Activated CD8-positive, alpha-beta T cell treated with anti-CD3 and anti-CD28 coated beads for 36 hours (primary cell): ENCODE measurements at regions of chr16 and their contacts with region 1.

Region 1: DNA sequence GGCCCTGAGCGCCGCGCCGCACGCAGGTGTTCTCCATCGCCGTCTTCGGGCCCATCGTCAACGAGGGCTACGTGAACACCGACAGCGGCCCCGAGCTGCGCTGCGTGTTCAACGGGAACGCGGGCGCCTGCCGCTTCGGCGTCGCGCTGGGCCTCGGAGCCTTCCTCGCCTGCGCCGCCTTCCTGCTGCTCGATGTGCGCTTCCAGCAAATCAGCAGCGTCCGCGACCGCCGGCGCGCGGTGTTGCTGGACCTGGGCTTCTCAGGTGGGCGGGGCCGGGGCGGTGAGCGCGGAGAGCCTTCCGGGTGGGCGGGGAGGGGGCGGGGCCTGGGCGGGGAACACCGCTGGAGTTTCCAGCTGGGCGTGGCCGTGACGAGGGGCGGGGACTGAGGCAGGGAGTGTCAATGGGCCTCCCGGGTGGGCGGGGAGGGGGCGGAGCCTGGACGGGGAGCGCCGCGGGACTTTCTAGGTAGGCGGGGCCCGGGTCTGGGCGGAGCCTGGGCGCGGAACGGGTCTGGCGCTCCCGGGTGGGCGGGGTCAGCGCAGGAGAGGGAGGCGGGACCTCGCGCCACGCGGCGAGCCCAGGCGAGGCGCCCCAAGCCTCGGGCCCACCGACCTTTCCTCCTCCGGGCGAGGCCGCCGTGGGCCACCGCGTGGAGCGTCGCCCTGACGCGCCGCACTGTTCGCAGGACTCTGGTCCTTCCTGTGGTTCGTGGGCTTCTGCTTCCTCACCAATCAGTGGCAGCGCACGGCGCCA is 2.4 kb downstream of the SYNGR3 start:
- DNase-seq: peak; percentile 98
- ATAC-seq: peak; percentile 82
- H3K4me3 Mint-ChIP-seq: peak overlapping the region; percentile 71
- H3K27ac Mint-ChIP-seq: peak overlapping the region; percentile 34
- H3K4me1 Mint-ChIP-seq: peaks cover 20% of the 10 kb centered on the region
- H3K27me3 Mint-ChIP-seq: peaks cover 18% of the 10 kb centered on the region
- CTCF ChIP-seq: no peak

Region 2: DNA sequence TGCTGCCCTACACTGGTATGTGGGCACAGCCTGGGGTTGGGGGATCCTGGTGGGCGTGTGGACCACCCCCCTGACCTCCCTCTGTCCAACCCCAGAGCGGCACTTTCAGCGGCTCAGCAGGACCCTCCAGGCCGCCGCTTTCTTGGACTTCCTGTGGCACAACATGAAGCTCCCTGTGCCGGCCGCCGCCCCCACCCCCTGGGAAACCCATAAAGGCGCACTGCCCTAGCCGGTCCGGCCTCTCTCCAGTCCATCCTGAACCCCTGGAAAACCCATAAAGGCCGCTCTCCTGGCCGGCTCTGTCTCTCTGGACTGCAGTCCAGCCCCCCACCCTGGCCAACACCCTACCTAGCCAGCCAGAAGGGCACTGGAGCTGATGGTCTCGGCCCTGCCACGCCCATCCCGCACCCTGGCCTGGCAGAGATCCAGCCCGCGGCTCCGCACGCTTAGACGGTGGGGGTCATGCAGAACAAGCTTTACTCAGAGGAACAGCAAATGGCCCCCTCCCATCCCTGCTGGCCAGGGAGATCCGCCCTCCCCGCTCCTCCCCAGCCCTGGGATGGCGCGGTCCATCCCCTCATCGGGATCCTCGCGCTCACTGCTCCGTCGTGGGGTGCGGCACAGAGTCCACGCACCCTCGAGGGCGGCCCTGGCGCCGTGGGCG is 13.5 kb before region 1 on chr16:
- CTCF ChIA-PET with region 1: interaction called, 5 read pairs
- POLR2A ChIA-PET with region 1: interaction called, 20 read pairs
- intact Hi-C with region 1: no loop called
- DNase-seq: no peak
- ATAC-seq: no peak
- H3K4me3 Mint-ChIP-seq: no peak overlapping the region
- H3K27ac Mint-ChIP-seq: no peak overlapping the region
- H3K4me1 Mint-ChIP-seq: peaks cover 15% of the 10 kb centered on the region
- H3K27me3 Mint-ChIP-seq: peaks cover 29% of the 10 kb centered on the region
- CTCF ChIP-seq: no peak

Region 3: DNA sequence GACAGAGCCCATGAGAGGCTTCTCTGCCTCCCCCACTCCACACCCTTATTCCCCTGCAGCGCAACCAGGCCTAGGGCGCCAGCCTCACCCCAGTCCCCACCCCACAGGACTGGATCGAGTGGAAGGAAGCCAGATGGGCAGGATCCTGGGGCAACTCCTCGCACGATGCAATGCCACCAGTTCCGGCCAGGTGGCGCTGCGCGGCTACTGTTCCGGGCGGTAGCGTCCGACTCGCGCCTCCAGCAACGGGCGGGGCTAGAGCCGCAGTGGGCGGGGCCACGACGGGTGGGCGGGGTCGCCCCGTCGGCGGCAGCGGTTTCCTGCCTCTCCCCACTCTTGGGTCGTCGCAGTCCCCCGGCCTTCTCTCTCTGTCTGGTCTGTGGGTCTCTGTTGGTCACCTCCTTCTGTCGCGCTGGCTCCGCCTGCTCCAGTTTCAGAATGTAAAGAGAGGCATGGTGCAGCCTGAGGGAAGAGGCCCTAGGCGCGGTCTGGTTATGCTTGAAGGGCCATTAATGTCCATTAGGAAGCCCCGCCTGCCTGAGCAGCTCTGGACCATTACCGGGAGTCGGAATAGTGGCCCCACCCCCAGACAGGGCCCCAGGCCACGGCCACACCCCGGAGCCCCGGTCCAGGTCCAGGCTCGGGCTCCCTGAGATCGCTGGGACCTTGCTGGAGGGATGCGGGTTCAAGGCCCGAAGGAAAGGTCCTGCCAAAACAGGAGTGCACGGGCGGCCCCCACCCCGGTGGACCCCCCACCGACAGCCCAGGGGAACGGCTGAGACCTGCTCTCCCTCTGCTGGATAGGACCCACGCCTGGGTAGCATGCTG is 31.2 kb after region 1 on chr16:
- CTCF ChIA-PET with region 1: no interaction called
- POLR2A ChIA-PET with region 1: no interaction called
- intact Hi-C with region 1: no loop called
- DNase-seq: peak; percentile 95
- ATAC-seq: peak; percentile 89
- H3K4me3 Mint-ChIP-seq: peak overlapping the region; percentile 49
- H3K27ac Mint-ChIP-seq: no peak overlapping the region
- H3K4me1 Mint-ChIP-seq: peaks cover 24% of the 10 kb centered on the region
- H3K27me3 Mint-ChIP-seq: peaks cover 29% of the 10 kb centered on the region
- CTCF ChIP-seq: peak; percentile 97